ENCODE measurements at regions of chr5 and their contacts with region 1.

Region 1: DNA sequence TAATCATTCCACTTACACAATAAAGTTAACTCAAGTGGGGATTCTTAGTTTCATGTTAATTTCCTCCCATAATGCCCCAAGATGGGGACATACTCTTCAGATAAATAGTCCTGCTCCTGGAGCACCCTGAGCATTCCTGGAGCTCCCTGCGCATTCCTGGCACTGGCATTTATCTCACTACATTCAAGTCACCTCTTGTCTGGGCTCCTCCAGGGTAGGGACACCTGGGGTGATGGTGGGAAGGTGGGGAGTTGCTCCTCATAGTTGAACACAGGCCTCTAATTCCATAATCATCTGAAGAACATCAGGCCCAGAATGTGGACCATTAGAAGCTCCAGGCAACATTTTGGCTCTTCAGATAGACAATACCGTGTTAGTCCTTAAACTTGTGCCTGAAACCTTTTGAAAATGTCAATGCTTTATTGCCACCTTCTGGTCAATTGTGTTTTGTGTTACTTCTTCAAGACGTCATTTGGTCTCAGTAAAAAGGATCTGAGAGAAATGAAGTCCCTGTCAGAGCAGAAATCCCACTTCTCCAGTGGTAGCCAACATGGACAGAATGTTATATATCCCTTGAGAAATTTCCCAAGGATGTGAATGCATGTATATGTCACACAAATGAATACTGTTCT is 14.2 kb upstream of the AGGF1 start:
- DNase-seq: no peak
- H3K4me3 ChIP-seq: no peak overlapping the region
- H3K27ac ChIP-seq: no peak overlapping the region
- H3K4me1 ChIP-seq: no peaks in the 10 kb centered on the region
- H3K27me3 ChIP-seq: peaks cover 0 to 6% (median 0%) of the 10 kb centered on the region in 4 donors
- CTCF ChIP-seq: peak in 1 of 3 experiments; percentile 5
- EP300 ChIP-seq: no peak
- POLR2A ChIP-seq: no peak

Region 2: GRCh38 chr5:76256116-76256889 is 759.8 kb before region 1 on chr5:
- intact Hi-C with region 1: no loop called
- DNase-seq: no peak
- H3K4me3 ChIP-seq: no peak overlapping the region
- H3K27ac ChIP-seq: no peak overlapping the region
- H3K4me1 ChIP-seq: peaks cover 0 to 9% (median 2%) of the 10 kb centered on the region in 4 donors
- H3K27me3 ChIP-seq: peaks cover 0 to 3% (median 0%) of the 10 kb centered on the region in 4 donors
- CTCF ChIP-seq: peak; percentile 38 to 46 (median 45)
- EP300 ChIP-seq: no peak
- POLR2A ChIP-seq: no peak

Region 3: DNA sequence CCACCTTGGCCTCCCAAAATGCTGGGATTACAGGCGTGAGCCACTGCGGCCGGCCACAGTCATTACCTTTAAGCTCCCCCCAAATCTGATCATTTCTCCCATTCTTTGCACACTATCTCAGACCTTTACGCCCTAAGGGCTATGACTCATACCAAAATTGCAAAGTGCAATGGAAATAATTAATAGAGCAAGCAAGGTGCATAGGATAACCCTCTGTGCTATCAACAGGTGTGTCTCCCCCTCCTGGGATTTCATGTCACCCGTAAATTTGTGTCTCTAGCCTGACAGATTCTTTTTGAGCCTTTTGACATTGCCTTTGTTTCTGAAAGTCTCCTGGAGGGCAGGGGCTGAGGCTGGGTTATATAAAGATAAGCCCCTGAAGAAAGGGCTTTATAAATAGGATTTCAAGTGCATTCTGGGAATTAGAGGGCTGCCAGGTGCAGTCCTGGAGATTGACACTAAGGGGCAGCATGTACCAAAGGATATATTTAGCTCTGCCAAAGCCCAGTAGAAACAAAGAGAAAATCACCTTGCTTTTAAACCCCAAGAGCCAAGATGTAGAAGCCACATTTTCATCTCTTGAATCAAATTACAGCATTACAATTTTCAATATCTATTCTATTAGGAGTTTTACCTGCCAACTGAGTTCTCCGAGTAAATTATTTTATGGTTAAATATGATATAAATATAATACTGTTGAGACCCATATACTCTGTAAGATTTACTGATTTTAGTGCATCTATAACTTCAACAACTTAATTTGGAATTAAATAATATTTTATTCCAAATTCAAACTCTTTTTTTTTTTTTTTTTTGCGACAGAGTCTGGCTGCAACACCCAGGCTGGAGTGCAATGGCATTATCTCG is 148.0 kb before region 1 on chr5:
- intact Hi-C with region 1: loop called (anchors 10 kb)
- DNase-seq: no peak
- H3K4me3 ChIP-seq: no peak overlapping the region
- H3K27ac ChIP-seq: no peak overlapping the region
- H3K4me1 ChIP-seq: no peaks in the 10 kb centered on the region
- H3K27me3 ChIP-seq: no peaks in the 10 kb centered on the region
- CTCF ChIP-seq: peak; percentile 39 to 65 (median 55)
- EP300 ChIP-seq: no peak
- POLR2A ChIP-seq: no peak

Region 4: DNA sequence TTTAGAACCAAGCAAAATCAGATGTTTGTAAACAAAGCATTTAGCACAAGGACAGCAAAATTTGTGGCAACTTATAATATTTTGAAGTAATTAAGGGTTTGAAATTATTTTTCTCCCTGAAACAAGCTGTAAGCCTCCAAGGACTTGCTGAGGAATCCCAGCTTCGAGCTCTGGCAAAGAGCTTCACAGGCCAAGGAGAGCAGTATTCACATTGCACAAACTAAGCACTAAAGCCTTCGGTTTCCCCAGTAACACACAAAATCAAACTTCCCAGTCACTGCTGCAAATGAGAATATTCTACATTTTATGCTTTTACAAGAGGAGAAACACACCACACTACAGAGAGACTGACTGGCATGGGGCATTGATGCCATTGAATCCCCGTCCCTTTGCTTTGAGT is 374.2 kb after region 1 on chr5:
- intact Hi-C with region 1: no loop called
- DNase-seq: no peak
- H3K4me3 ChIP-seq: no peak overlapping the region
- H3K27ac ChIP-seq: no peak overlapping the region
- H3K4me1 ChIP-seq: no peaks in the 10 kb centered on the region
- H3K27me3 ChIP-seq: no peaks in the 10 kb centered on the region
- CTCF ChIP-seq: no peak
- EP300 ChIP-seq: no peak
- POLR2A ChIP-seq: no peak

Measured in esophagus muscularis mucosa (tissue), 4 donors.